PC-9 (cell line): ENCODE measurements at regions of chr19 and their contacts with region 1.

Region 1: GRCh38 chr19:8423817-8424223 is 10.7 kb downstream of the MARCHF2 start:
- DNase-seq: peak; percentile 91 to 98
- H3K4me3 ChIP-seq: peak overlapping the region; percentile 27; the same call in 1 of the 2 replicates
- H3K27ac ChIP-seq: peak overlapping the region; percentile 64
- H3K4me1 ChIP-seq: peaks cover 19% of the 10 kb centered on the region
- H3K27me3 ChIP-seq: no peaks in the 10 kb centered on the region
- CTCF ChIP-seq: no peak

Region 2: GRCh38 chr19:8438236-8438635 is 14.4 kb after region 1 on chr19:
- CTCF ChIA-PET with region 1: no interaction called
- POLR2A ChIA-PET with region 1: interaction called, 17 read pairs
- intact Hi-C with region 1: no loop called
- DNase-seq: no peak
- H3K4me3 ChIP-seq: no peak overlapping the region
- H3K27ac ChIP-seq: no peak overlapping the region
- H3K4me1 ChIP-seq: peaks cover 23% of the 10 kb centered on the region
- H3K27me3 ChIP-seq: no peaks in the 10 kb centered on the region
- CTCF ChIP-seq: no peak